ENCODE measurements at regions of chr15 and their contacts with region 1.

Region 1: GRCh38 chr15:49927189-49927868 is 191.7 kb downstream of the ATP8B4 start:
- DNase-seq: no peak
- H3K4me3 ChIP-seq: no peak overlapping the region
- H3K27ac ChIP-seq: no peak overlapping the region
- H3K4me1 ChIP-seq: no peaks in the 10 kb centered on the region
- H3K27me3 ChIP-seq: no peaks in the 10 kb centered on the region
- CTCF ChIP-seq: no peak
- EP300 ChIP-seq: no peak
- POLR2A ChIP-seq: no peak

Region 2: GRCh38 chr15:49979705-49980382 is 52.5 kb after region 1 on chr15:
- intact Hi-C with region 1: no loop called
- DNase-seq: no peak
- H3K4me3 ChIP-seq: no peak overlapping the region
- H3K27ac ChIP-seq: no peak overlapping the region
- H3K4me1 ChIP-seq: no peaks in the 10 kb centered on the region
- H3K27me3 ChIP-seq: no peaks in the 10 kb centered on the region
- CTCF ChIP-seq: no peak
- EP300 ChIP-seq: no peak
- POLR2A ChIP-seq: no peak

Region 3: GRCh38 chr15:50241684-50242450 is 314.5 kb after region 1 on chr15:
- intact Hi-C with region 1: loop called in 1 of 4 experiments (anchors 2 kb)
- DNase-seq: no peak
- H3K4me3 ChIP-seq: no peak overlapping the region
- H3K27ac ChIP-seq: no peak overlapping the region
- H3K4me1 ChIP-seq: no peaks in the 10 kb centered on the region
- H3K27me3 ChIP-seq: no peaks in the 10 kb centered on the region
- CTCF ChIP-seq: no peak
- EP300 ChIP-seq: no peak
- POLR2A ChIP-seq: no peak

Region 4: GRCh38 chr15:50440932-50441331 is 513.6 kb after region 1 on chr15:
- intact Hi-C with region 1: no loop called
- DNase-seq: no peak
- H3K4me3 ChIP-seq: no peak overlapping the region
- H3K27ac ChIP-seq: no peak overlapping the region
- H3K4me1 ChIP-seq: peaks cover 2% of the 10 kb centered on the region
- H3K27me3 ChIP-seq: no peaks in the 10 kb centered on the region
- CTCF ChIP-seq: no peak
- EP300 ChIP-seq: no peak
- POLR2A ChIP-seq: no peak